ENCODE measurements at regions of chr6 and their contacts with region 1.

Region 1: DNA sequence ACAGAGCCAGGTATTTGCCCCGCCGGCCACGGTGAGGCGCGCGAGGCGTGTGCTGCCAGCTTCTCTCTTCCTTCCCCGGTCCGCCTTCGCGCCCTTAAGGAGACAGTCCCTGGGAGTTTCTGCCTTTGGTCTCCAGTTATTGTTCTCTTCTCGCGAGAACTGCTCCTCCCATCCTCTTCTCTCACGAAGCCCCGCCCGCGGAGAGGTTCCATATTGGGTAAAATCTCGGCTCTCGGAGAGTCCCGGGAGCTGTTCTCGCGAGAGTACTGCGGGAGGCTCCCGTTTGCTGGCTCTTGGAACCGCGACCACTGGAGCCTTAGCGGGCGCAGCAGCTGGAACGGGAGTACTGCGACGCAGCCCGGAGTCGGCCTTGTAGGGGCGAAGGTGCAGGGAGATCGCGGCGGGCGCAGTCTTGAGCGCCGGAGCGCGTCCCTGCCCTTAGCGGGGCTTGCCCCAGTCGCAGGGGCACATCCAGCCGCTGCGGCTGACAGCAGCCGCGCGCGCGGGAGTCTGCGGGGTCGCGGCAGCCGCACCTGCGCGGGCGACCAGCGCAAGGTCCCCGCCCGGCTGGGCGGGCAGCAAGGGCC is at the start of gene MAPK14:
- DNase-seq: peak; percentile 88 to 99
- ATAC-seq: peak; percentile 88 to 95
- H3K4me3 ChIP-seq: peak within 1 kb of the TSS; percentile 97
- H3K27ac ChIP-seq: peak within 1 kb of the TSS; percentile 88 to 99
- H3K4me1 ChIP-seq: peaks cover 10% of the 10 kb centered on the region; the same call in 2 of the 3 replicates
- CTCF ChIP-seq: peak; percentile 71
- EP300 ChIP-seq: no peak
- POLR2A ChIP-seq: peak; percentile 83
- RAD21 ChIP-seq: peak; percentile 81
- polyA plus RNA-seq, gene MAPK14: 36.7 and 40.2 TPM in 2 replicates

Region 2: GRCh38 chr6:35844290-35844689 is 183.3 kb before region 1 on chr6:
- CTCF ChIA-PET with region 1: no interaction called
- POLR2A ChIA-PET with region 1: no interaction called
- DNase-seq: no peak
- ATAC-seq: no peak
- H3K4me3 ChIP-seq: no peak overlapping the region
- H3K27ac ChIP-seq: no peak overlapping the region
- H3K4me1 ChIP-seq: no peaks in the 10 kb centered on the region
- CTCF ChIP-seq: no peak
- EP300 ChIP-seq: no peak
- POLR2A ChIP-seq: no peak
- RAD21 ChIP-seq: no peak

Region 3: GRCh38 chr6:35920793-35921732 is 106.5 kb before region 1 on chr6 and contains the start of gene SRPK1:
- CTCF ChIA-PET with region 1: no interaction called
- POLR2A ChIA-PET with region 1: interaction called, 13 read pairs
- DNase-seq: peak; percentile 71 to 88
- ATAC-seq: peak; percentile 95
- H3K4me3 ChIP-seq: peak within 1 kb of the TSS; percentile 69
- H3K27ac ChIP-seq: peak within 1 kb of the TSS; percentile 82 to 99
- H3K4me1 ChIP-seq: peaks cover 27% of the 10 kb centered on the region; the same call in 2 of the 3 replicates
- CTCF ChIP-seq: no peak
- EP300 ChIP-seq: no peak
- POLR2A ChIP-seq: peak; percentile 87
- RAD21 ChIP-seq: no peak
- polyA plus RNA-seq, gene SRPK1: 39.9 and 65.9 TPM in 2 replicates

Region 4: DNA sequence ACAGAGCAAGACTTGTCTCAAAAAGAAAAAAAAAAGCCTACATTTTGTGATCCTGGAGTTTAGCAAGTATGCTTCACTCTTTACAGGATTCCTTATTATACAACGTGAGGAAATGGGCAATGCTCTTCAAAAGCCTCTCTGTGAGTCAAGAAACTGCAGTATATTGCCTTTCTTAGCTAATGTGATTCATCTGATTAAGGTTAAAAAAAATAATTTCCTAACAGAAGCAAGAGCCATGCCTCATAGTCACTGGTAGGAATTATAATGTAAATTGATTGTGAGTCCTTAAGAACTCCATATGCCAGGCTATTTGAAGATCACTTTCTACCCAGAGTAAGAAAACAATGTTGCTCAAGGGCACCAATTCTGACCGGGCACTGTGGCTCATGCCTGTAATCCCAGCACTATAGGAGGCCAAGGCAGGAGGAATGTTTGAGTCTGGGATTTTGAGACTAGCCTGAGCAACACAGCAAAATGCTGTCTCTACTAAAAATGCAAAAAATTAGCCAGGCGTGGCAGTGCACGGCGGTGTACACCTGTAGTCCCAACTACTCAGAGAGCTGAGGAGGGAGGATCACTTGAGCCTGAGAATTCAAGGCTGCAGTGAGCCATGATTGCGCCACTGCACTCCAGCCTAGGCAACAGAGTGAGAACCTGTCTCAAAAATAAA is 46.5 kb before region 1 on chr6:
- CTCF ChIA-PET with region 1: no interaction called
- POLR2A ChIA-PET with region 1: no interaction called
- DNase-seq: no peak
- ATAC-seq: no peak
- H3K4me3 ChIP-seq: no peak overlapping the region
- H3K27ac ChIP-seq: no peak overlapping the region
- H3K4me1 ChIP-seq: no peaks in the 10 kb centered on the region
- CTCF ChIP-seq: no peak
- EP300 ChIP-seq: no peak
- POLR2A ChIP-seq: no peak
- RAD21 ChIP-seq: no peak

Region 5: GRCh38 chr6:36248980-36249379 is 221.4 kb after region 1 on chr6:
- CTCF ChIA-PET with region 1: no interaction called
- POLR2A ChIA-PET with region 1: no interaction called
- DNase-seq: no peak
- ATAC-seq: no peak
- H3K4me3 ChIP-seq: no peak overlapping the region
- H3K27ac ChIP-seq: no peak overlapping the region
- H3K4me1 ChIP-seq: no peaks in the 10 kb centered on the region
- CTCF ChIP-seq: no peak
- EP300 ChIP-seq: no peak
- POLR2A ChIP-seq: no peak
- RAD21 ChIP-seq: no peak